HEK293 (cell line): ENCODE measurements at regions of chr6 and their contacts with region 1.

Region 1: GRCh38 chr6:34027445-34027936 is 118.4 kb downstream of the GRM4 start:
- H3K4me3 ChIP-seq: no peak overlapping the region
- H3K27ac ChIP-seq: no peak overlapping the region
- H3K4me1 ChIP-seq: no peaks in the 10 kb centered on the region
- CTCF ChIP-seq: peak; percentile 54

Region 2: DNA sequence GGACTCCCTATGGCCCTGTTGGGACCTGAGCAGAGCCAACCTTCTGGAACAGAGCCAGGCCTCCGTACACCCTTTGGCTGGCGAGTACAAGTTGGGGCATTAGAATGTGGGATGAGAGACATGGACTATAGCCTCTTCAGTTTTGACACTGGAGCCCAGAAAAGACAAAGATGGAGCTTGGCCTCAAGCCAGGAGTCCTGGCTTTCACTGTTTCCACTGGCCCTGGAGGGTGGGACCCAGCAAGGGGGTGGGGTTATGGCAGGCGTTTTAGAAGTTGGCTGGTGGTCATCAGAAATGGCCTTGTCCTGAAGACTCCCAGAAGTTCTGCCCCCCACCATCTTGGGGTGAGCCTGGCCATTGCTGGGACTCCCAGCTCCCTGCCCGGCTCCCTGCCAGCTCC is 384.6 kb before region 1 on chr6:
- CTCF ChIA-PET with region 1: no interaction called
- POLR2A ChIA-PET with region 1: no interaction called
- H3K4me3 ChIP-seq: no peak overlapping the region
- H3K27ac ChIP-seq: no peak overlapping the region
- H3K4me1 ChIP-seq: no peaks in the 10 kb centered on the region
- CTCF ChIP-seq: no peak

Region 3: GRCh38 chr6:33851959-33852358 is 175.5 kb before region 1 on chr6:
- CTCF ChIA-PET with region 1: interaction called, 20 read pairs
- POLR2A ChIA-PET with region 1: no interaction called
- H3K4me3 ChIP-seq: no peak overlapping the region
- H3K27ac ChIP-seq: no peak overlapping the region
- H3K4me1 ChIP-seq: no peaks in the 10 kb centered on the region
- CTCF ChIP-seq: peak; percentile 63